ENCODE measurements at regions of chr12 and their contacts with region 1.

Region 1: DNA sequence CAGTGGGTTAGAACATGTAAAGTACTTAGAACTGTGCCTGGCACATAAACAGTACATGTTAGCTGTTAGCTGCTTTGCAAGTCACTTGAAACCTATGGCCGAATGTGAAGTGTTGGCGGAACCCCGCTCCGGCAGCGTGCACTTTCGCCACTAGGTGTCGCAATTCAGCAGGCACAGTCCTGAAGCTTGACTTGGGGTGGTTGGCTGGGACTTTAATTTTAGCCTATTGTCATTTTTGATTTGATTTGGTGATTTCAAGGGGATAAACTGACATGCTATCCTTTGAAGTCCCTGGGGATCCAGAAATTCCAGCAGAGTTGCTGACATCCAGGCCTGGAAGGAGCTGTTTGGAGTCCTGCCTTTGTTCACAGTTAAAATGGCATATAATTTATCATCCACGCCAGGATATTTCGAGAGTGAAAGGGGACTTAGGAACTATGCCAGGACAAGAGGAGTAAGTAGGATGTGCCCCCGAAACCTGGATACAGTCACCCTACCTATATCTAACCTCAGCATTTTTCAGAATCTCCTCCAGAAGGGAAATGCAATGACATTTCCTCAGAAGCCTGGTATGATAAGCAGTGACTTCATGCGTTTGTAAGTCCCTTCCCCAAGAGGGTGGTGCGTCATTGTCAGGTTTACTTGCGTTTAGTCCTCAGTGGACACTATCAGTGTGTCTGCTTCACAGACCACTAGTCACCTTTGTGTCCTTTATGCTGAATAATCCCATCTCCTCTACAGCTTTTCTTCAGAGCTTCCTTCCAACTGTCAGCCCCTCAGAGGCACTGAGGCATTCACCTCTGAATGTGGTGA is 3.5 kb upstream of the TSPAN9 start:
- DNase-seq: peak; percentile 65
- H3K4me3 ChIP-seq: no peak overlapping the region
- H3K27ac ChIP-seq: no peak overlapping the region
- H3K4me1 ChIP-seq: peaks cover 18% of the 10 kb centered on the region
- H3K27me3 ChIP-seq: no peaks in the 10 kb centered on the region
- CTCF ChIP-seq: peak; percentile 99 to 100

Region 2: GRCh38 chr12:3014641-3015040 is 59.0 kb before region 1 on chr12:
- CTCF ChIA-PET with region 1: no interaction called
- dilution Hi-C with region 1: no loop called
- in situ Hi-C with region 1: no loop called
- intact Hi-C with region 1: no loop called
- DNase-seq: no peak
- H3K4me3 ChIP-seq: no peak overlapping the region
- H3K27ac ChIP-seq: no peak overlapping the region
- H3K4me1 ChIP-seq: no peaks in the 10 kb centered on the region
- H3K27me3 ChIP-seq: no peaks in the 10 kb centered on the region
- CTCF ChIP-seq: no peak

Region 3: DNA sequence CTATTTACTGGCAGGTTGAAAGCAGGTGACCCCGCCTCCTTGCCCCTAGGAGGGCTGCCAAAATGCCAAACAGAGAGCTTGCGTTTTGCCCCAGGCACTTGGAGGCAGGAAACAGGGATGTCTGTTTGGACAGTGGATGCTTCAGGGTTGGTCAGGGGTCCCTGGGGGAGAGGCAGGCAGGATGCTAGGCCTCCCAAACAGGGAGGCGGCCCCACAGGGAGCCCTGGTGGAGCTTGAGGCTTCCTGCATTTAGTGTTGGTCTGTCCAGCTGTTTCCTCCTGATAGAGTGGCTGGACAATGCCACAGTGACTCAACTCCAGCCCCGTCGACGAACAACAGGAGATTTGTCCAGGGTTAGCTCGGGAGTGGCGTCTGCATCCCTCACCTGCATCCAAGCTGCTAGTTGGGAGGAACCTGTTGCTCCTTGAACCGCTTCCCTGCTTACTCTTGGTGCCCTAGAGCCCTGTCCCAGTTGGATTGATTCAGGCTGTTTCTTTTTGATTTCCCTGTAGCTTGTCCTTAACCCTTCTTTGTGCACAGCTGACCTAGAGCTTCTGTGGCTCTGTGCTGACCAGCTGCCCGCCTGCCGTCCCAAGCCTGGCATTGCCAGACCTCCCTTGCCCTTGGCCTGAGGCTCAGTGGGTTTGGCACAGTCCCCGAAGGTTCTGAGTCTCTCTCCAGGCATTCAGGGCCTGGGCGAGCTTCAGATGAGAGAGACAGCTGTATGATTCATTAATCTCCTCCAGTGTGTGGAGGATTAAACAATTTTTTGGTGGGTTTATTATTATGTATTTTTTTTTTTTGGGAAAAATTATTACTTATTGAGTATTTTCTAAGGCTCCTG is 49.4 kb after region 1 on chr12:
- CTCF ChIA-PET with region 1: interaction called, 4 read pairs
- dilution Hi-C with region 1: no loop called
- in situ Hi-C with region 1: loop called in 1 of 2 experiments (anchors 5 kb)
- intact Hi-C with region 1: loop called (anchors 2 kb)
- DNase-seq: peak; percentile 79
- H3K4me3 ChIP-seq: no peak overlapping the region
- H3K27ac ChIP-seq: peak overlapping the region; percentile 38
- H3K4me1 ChIP-seq: peaks cover 56% of the 10 kb centered on the region
- H3K27me3 ChIP-seq: no peaks in the 10 kb centered on the region
- CTCF ChIP-seq: no peak

Region 4: DNA sequence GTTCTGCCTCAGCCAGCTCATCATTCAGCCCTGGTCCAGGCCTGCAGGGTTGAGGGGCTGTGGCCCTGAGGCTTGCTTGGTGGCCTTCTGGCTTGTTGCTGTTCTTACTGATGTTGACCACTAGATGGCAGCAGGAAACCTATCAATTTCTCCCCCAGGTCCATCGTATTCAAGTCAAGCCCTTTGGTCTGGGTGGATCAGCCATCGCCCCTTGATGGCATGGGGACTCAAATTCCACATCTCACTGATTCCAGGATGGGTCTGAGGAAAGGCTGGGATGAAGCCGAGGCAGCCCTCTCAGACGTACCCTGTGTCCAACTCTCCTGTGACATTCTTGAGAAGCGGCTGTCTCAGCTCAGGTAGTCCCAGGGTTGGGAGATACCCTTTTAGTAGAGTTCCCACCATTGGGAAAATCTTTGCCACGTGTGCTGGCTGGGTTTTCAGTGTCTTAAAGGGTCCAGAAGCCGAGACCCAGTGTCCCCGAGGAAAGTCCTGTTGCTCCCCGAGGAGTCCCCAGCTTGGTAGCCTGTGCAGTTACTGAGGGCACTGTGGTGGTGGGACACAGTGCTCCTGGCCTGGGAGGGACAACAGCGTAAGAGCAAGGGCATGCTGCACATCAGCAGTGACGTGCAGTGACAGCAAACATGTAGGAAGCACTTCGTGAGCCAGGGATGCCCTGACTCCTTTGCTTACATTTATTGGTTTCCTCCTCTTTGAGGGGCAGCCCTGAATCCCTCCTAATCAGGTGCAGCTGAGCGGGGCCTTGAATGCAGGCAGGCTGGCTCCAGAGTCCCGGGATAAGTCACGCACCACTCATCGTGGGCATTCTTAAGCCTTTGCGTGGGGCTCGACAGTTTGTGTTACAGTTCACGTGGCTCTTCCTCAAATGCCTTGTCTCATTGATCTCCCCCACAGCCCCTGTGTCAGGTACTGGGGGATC is 62.1 kb after region 1 on chr12:
- CTCF ChIA-PET with region 1: no interaction called
- dilution Hi-C with region 1: no loop called
- in situ Hi-C with region 1: no loop called
- intact Hi-C with region 1: loop called (anchors 1 kb)
- DNase-seq: peak; percentile 51
- H3K4me3 ChIP-seq: no peak overlapping the region
- H3K27ac ChIP-seq: no peak overlapping the region
- H3K4me1 ChIP-seq: peaks cover 2% of the 10 kb centered on the region
- H3K27me3 ChIP-seq: no peaks in the 10 kb centered on the region
- CTCF ChIP-seq: peak; percentile 66 to 79

Region 5: GRCh38 chr12:3202734-3203446 is 129.2 kb after region 1 on chr12:
- CTCF ChIA-PET with region 1: no interaction called
- dilution Hi-C with region 1: no loop called
- in situ Hi-C with region 1: no loop called
- intact Hi-C with region 1: loop called (anchors 1 kb)
- DNase-seq: peak; percentile 23
- H3K4me3 ChIP-seq: no peak overlapping the region
- H3K27ac ChIP-seq: no peak overlapping the region
- H3K4me1 ChIP-seq: peaks cover 18% of the 10 kb centered on the region
- H3K27me3 ChIP-seq: no peaks in the 10 kb centered on the region
- CTCF ChIP-seq: peak; percentile 95 to 96

Region 6: DNA sequence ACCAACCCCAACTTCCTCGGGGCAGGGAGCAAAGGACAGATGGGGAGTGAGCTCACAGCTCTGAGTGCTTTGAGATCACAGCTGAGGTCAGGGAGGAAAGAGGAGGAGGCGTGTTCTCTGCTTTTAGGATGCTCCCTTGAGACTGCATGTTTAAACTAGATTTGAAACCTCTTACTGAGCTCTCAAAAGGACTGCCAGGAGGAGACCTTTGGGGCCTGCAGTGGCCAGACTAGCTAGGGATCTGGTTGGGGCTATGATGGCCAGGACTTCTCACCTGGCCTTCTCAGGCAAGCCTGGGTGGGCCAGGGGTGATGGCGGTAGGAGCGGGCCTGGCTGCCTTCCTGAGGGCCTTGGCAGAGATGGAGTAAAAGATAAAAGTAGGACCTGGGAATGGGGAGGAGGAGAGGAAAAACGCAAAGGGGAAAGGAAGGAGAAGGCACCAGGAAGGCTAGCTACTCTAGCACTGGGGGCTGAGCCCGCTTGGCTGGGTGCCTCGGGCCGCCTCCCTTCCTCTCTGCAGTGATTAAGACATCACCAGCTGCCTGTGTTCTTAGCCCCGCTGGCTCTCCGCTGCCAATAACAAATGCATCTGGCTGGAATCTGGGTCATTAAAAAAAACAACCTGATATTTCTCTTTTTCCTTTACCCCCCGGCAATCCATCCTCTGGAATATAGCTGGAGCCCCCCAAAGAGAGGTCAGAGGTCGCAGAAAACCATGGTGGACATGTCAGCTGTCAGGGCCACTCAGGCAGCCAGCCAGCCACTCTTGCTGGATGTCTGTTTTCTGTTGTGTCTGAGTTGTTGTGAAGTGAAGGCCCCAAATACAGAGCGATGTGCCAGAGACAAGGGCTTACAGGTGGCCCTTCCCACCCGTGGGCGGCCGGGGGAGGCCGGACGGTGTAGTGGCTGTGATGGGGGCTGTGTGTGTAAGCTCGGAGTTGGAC is 144.9 kb after region 1 on chr12:
- CTCF ChIA-PET with region 1: no interaction called
- dilution Hi-C with region 1: no loop called
- in situ Hi-C with region 1: no loop called
- intact Hi-C with region 1: loop called (anchors 5 kb)
- DNase-seq: peak; percentile 47
- H3K4me3 ChIP-seq: no peak overlapping the region
- H3K27ac ChIP-seq: peak overlapping the region; percentile 72
- H3K4me1 ChIP-seq: peaks cover 33% of the 10 kb centered on the region
- H3K27me3 ChIP-seq: no peaks in the 10 kb centered on the region
- CTCF ChIP-seq: no peak

Measured in mammary epithelial cell (primary cell).